Vagina (tissue), 2 donors: ENCODE measurements at regions of chr17 and their contacts with region 1.

Region 1: GRCh38 chr17:82351716-82352488 is 7.1 kb upstream of the TEX19 start:
- DNase-seq: no peak
- H3K4me3 ChIP-seq: no peak overlapping the region
- H3K27ac ChIP-seq: no peak overlapping the region
- H3K4me1 ChIP-seq: peaks cover 7% of the 10 kb centered on the region
- H3K27me3 ChIP-seq: no peaks in the 10 kb centered on the region
- CTCF ChIP-seq: peak; percentile 87 to 94 (median 88)
- POLR2A ChIP-seq: no peak

Region 2: DNA sequence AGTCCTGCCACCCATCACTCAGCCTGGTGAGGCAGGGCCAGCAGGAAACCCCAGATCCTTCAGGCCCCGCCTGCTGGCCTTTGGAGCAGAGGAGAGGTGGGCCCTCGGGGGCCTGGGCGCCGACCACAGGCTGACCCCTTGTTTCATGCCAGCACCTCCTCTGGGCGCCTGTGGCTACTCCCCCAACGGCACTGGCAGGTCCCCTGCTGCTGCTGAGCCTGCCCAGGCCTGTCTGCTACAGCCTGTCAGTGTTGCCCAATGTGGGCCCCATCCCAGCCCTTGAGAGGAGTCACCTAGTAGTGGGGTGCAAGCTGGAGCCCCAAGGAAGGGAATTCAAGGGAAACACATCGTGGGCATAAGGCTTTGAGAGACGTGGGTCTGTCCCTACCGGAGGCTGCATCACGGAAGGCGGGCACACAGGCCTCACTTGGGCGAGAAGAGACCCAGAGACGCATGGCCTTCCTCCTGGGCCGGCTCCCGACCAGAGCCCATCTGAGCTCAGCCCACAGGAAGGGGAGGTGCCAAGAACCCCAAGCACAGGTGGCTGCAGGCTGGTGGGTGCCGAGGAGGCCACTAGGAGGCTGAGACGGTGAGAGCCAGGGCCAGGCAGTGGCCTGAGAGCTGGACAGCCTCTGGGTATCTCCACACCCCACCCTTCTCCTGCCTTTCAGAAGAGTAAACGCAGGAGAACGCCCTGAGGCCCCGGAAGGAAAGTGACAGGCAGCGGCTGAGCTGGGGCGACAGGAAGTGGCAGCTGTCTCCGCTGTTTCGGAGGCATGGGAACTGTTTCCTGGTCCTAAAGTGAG is 245.8 kb before region 1 on chr17:
- intact Hi-C with region 1: no loop called
- DNase-seq: no peak
- H3K4me3 ChIP-seq: peak overlapping the region; percentile 8 to 36
- H3K27ac ChIP-seq: peak overlapping the region; percentile 80
- H3K4me1 ChIP-seq: peaks cover 56% of the 10 kb centered on the region
- H3K27me3 ChIP-seq: no peaks in the 10 kb centered on the region
- CTCF ChIP-seq: no peak
- POLR2A ChIP-seq: no peak

Region 3: GRCh38 chr17:82418001-82418986 is 66.4 kb after region 1 on chr17 and contains the starts of genes HEXD and OGFOD3:
- intact Hi-C with region 1: loop called (anchors 5 kb)
- DNase-seq: no peak
- H3K4me3 ChIP-seq: peak within 1 kb of the TSS; percentile 79 to 83
- H3K27ac ChIP-seq: peak within 1 kb of the TSS; percentile 84
- H3K4me1 ChIP-seq: peaks cover 25% of the 10 kb centered on the region
- H3K27me3 ChIP-seq: no peaks in the 10 kb centered on the region
- CTCF ChIP-seq: no peak
- POLR2A ChIP-seq: peak in 1 of 2 donors; percentile 38
- total RNA-seq, gene HEXD: 90.4 TPM
- total RNA-seq, gene OGFOD3: 25.5 TPM

Region 4: GRCh38 chr17:82494236-82495055 is 142.5 kb after region 1 on chr17:
- intact Hi-C with region 1: loop called (anchors 10 kb)
- DNase-seq: peak in 1 of 2 donors; percentile 93
- H3K4me3 ChIP-seq: no peak overlapping the region
- H3K27ac ChIP-seq: peak overlapping the region; percentile 54
- H3K4me1 ChIP-seq: peaks cover 50% of the 10 kb centered on the region
- H3K27me3 ChIP-seq: no peaks in the 10 kb centered on the region
- CTCF ChIP-seq: peak; percentile 48 to 81 (median 80)
- POLR2A ChIP-seq: no peak

Region 5: DNA sequence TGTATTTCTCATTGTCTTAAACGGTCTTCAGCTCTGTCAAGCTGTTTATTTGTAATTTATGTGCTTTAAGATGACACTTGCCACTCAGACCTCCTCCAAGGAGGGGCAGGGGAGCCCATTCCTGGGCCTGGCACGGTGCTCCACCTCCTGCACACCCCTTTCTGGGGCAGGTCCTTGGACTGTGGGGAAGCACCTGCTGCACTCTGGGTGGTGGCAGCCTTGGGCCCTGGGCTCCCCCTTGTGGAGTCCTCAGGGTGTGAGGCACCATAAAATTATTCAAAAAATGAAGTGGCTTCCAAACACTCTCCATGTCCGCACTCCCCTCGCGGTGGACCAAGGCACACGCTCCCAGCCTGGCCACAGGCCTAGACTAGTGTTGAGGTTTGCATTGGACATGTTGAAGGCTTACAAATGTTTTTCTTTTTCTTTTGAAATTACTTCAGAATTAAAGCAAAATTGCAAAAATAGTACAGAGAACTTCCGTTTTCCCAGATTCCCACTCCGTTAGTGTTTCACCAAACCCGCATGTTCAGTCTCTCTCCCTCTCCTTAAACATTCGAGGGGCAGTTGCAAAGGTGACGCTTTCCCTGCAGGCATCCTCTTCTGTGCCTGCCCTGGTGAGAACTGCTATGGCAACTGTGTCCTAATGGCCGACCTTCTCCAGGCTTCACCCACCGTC is 200.0 kb after region 1 on chr17:
- intact Hi-C with region 1: loop called (anchors 2 kb)
- DNase-seq: no peak
- H3K4me3 ChIP-seq: no peak overlapping the region
- H3K27ac ChIP-seq: peak overlapping the region; percentile 34
- H3K4me1 ChIP-seq: peaks cover 66% of the 10 kb centered on the region
- H3K27me3 ChIP-seq: no peaks in the 10 kb centered on the region
- CTCF ChIP-seq: peak; percentile 15 to 66 (median 61)
- POLR2A ChIP-seq: no peak

Region 6: GRCh38 chr17:82775001-82775823 is 423.3 kb after region 1 on chr17:
- intact Hi-C with region 1: loop called (anchors 10 kb)
- DNase-seq: no peak
- H3K4me3 ChIP-seq: no peak overlapping the region
- H3K27ac ChIP-seq: no peak overlapping the region
- H3K4me1 ChIP-seq: peaks cover 6% of the 10 kb centered on the region
- H3K27me3 ChIP-seq: no peaks in the 10 kb centered on the region
- CTCF ChIP-seq: peak; percentile 61 to 71 (median 68)
- POLR2A ChIP-seq: no peak

Region 7: DNA sequence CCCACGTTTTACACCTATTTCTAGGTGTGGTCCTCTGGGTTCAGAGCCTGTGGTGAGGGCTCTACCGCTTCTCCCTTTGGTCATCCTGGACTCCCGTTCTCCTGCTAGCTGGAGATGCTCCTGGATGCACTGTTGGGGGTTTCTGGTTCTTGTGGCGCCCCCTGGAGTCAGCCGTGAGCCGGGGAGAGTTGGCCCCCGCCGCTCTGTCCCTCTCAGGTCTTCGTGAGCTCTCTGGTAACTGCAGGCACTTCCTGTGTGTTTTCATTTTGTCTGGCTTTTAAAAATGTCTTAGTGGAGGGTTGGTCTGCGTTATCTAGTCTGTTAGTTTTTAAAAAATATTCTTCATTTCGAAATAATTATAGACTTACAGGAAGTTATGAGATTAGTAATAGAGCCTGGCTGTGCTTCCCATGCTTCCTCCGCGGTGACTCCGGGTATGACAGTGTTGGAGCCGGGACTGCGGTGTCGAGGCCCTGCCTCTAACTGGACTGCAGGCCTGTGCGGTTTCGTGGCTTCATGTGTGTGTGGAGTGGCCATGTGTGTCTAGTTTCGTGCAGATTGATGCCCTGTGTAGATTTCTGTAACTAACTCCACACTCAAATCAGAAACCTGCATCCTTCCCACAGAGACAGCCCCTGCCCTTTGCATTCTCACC is 565.9 kb after region 1 on chr17:
- intact Hi-C with region 1: loop called (anchors 10 kb)
- DNase-seq: no peak
- H3K4me3 ChIP-seq: no peak overlapping the region
- H3K27ac ChIP-seq: no peak overlapping the region
- H3K4me1 ChIP-seq: no peaks in the 10 kb centered on the region
- H3K27me3 ChIP-seq: no peaks in the 10 kb centered on the region
- CTCF ChIP-seq: peak in 1 of 3 experiments; percentile 20
- POLR2A ChIP-seq: no peak